Heart right ventricle (tissue), 16 donors: ENCODE measurements at regions of chr1 and their contacts with region 1.

Region 1: GRCh38 chr1:219576931-219577730 is 35.8 kb downstream of the ZC3H11B start:
- DNase-seq: no peak
- ATAC-seq: no peak
- H3K4me3 ChIP-seq: no peak overlapping the region
- H3K27ac ChIP-seq: no peak overlapping the region
- H3K4me1 ChIP-seq: peaks cover 0 to 14% (median 7%) of the 10 kb centered on the region in 9 donors
- H3K27me3 ChIP-seq: no peaks in the 10 kb centered on the region
- CTCF ChIP-seq: no peak

Region 2: GRCh38 chr1:219480011-219480410 is 97.1 kb before region 1 on chr1:
- intact Hi-C with region 1: no loop called
- DNase-seq: no peak
- ATAC-seq: no peak
- H3K4me3 ChIP-seq: no peak overlapping the region
- H3K27ac ChIP-seq: no peak overlapping the region
- H3K4me1 ChIP-seq: no peaks in the 10 kb centered on the region
- H3K27me3 ChIP-seq: peaks cover 0 to 3% (median 0%) of the 10 kb centered on the region in 7 donors
- CTCF ChIP-seq: no peak

Region 3: DNA sequence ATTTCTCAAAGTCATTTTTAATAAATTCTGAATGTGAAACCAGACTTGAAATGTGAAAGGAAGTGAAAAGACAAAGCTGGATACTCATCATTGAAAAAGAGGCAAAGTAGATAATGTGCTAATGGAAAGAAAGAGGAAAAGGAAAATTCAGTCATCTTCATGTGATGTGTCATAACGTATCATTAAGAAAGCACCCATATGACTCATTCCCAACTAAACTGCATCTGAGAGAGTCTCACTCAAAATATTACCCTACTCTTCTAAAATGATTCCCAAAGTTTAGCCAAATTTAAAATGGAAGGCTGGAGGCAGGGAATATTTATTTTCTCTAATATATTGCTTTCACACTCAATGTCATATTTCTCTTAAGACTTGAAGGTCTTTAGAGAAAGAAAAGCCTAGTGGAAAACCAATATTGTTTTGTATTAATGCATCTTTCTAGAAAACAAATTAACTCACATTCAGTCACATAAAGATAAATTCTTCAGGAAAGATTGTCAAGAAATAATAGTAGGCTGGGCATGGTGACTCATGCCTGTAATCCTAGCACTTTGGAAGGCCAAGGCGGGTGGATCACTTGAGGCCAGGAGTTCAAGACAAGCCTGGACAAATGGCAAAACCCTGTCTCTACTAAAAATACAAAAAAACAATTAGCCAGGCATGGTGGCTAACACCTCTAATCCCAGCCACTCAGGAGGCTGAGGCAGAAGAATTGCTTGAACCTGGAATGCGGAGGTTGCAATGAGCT is 221.3 kb after region 1 on chr1:
- intact Hi-C with region 1: loop called in 3 of 10 experiments (anchors 10 kb)
- DNase-seq: no peak
- ATAC-seq: peak in 1 of 8 donors; percentile 55
- H3K4me3 ChIP-seq: no peak overlapping the region
- H3K27ac ChIP-seq: peak overlapping the region in 1 of 10 donors; percentile 38
- H3K4me1 ChIP-seq: peaks cover 0 to 6% (median 0%) of the 10 kb centered on the region in 9 donors
- H3K27me3 ChIP-seq: no peaks in the 10 kb centered on the region
- CTCF ChIP-seq: no peak

Region 4: DNA sequence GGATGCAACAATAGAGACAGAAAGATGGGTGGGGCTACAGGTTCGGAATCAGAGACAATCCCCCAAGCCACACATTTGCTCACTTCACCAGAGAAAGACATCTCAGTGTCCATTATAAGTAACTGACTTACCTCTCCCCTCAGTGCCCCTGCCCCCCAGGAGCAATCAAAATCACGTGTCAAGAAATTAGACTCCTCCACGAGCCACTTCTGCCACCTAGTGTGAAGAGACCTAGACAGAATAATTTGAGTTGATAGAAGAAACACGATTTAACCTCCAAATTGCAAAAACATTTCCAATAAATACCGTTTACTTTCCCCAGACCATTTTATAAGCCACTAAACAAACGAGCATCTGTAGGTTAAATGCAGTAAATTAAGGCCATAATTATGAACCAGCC is 228.1 kb after region 1 on chr1:
- intact Hi-C with region 1: loop called in 4 of 10 experiments (anchors 5 to 10 kb)
- DNase-seq: no peak
- ATAC-seq: no peak
- H3K4me3 ChIP-seq: no peak overlapping the region
- H3K27ac ChIP-seq: no peak overlapping the region
- H3K4me1 ChIP-seq: peaks cover 0 to 5% (median 0%) of the 10 kb centered on the region in 9 donors
- H3K27me3 ChIP-seq: peaks cover 0 to 4% (median 0%) of the 10 kb centered on the region in 7 donors
- CTCF ChIP-seq: peak in 7 of 9 donors; percentile 15 to 47 (median 34)

Region 5: DNA sequence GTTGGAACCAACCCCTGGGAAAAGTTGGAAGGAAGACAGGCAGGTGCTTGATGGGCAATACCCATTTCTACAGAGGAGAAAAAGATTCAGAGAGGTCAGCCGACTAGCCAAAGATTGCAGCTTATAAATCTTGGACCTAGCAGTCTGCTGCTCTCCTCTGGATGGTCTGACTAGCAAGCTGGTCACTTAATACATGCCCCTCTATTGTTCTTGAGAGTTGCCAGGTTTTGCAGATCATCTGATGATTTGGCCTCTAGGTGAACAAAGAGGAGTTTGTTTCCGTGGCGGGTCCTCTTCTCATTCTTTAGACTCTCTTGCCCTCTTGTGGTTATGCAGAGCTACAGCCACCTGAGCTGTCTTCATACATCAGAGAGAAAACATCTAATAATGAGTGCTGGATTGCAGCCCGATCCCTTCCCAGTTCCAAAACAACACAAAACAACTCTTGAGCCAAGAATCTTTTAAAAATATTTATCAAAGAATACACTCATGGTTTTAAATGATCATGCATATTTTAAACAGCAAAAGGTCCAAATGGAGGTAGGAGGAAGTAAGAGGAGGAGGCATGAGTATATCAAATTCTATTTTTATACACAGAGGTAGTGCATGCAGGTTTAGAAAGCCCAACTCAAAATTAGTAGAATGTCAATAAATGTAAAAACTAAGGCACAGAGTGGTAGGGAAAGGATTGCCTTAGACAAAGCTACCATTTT is 235.5 kb after region 1 on chr1:
- intact Hi-C with region 1: loop called in 4 of 10 experiments (anchors 5 to 10 kb)
- DNase-seq: peak in 1 of 2 donors; percentile 21
- ATAC-seq: peak in 7 of 8 donors; percentile 70 to 83 (median 80)
- H3K4me3 ChIP-seq: no peak overlapping the region
- H3K27ac ChIP-seq: no peak overlapping the region
- H3K4me1 ChIP-seq: peaks cover 0 to 11% (median 4%) of the 10 kb centered on the region in 9 donors
- H3K27me3 ChIP-seq: peaks cover 0 to 10% (median 0%) of the 10 kb centered on the region in 7 donors
- CTCF ChIP-seq: peak; percentile 58 to 88 (median 79)